ENCODE measurements at regions of chr19 and their contacts with region 1.

Region 1: DNA sequence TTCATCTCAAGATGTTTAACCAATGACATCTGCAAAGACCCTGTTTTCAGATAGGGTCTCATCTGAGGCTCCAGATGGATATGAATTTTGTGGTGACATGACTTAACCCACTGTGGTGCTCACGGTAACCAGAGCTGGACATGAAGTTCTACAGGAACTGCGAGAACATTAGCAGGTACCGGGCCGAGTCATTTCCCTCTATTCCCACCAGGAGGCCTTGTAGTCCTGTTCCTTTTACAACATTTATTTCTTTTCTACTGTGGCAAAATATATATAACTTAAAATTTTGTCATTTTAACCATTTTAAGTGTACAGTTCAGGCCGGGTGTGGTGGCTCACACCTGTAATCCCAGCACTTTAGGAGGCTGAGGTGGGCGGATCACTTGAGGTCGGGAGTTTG is 7.6 kb upstream of the TSPAN16 start:
- DNase-seq: peak in 2 of 3 donors; percentile 21 to 45
- ATAC-seq: no peak
- H3K4me3 ChIP-seq: no peak overlapping the region
- H3K27ac ChIP-seq: no peak overlapping the region
- H3K4me1 ChIP-seq: no peaks in the 10 kb centered on the region
- H3K27me3 ChIP-seq: no peaks in the 10 kb centered on the region

Region 2: GRCh38 chr19:11242864-11243797 is 45.2 kb before region 1 on chr19:
- intact Hi-C with region 1: loop called in 1 of 4 experiments (anchors 5 kb)
- DNase-seq: peak; percentile 95 to 99 (median 98)
- ATAC-seq: peak; percentile 89 to 91
- H3K4me3 ChIP-seq: no peak overlapping the region
- H3K27ac ChIP-seq: peak overlapping the region; percentile 27
- H3K4me1 ChIP-seq: peaks cover 4% of the 10 kb centered on the region
- H3K27me3 ChIP-seq: no peaks in the 10 kb centered on the region